ENCODE measurements at regions of chrX and their contacts with region 1.

Region 1: DNA sequence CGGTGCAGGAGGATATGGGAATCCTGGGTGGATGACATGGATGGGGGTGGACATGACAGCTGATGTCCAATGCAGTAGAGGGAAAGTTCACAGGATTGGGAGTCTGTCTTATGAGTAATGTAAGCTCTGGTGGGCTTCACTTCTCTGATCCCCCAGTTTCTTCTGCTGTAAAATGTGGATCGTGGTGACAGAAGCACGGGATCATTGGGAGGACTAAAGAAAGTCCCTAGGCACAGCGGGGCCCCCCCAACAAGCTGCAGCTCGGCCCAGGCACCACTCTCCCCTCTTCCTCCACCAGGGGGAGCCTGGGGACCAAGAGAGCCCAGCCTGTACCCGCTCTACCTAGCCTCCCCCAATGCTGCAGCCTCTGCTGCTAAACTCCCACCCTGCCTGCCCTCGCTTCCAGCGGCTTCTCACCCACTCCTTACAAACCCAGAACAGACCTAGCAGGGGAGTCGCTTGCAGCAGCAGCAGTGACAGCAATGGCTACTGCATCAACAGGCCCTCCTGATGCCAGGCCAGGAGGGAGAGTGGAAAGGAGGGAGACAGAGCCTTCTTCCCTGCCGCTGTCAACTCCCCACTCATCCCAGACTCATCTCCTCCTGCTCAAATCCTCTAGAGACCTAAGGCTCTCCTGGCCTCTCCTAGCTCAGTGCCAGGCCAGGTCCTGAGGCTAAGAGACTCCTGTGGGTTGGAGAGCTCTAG is 36.1 kb upstream of the IQSEC2 start:
- DNase-seq: peak; percentile 68
- H3K4me3 Mint-ChIP-seq: no peak overlapping the region
- H3K27ac Mint-ChIP-seq: no peak overlapping the region
- H3K4me1 Mint-ChIP-seq: no peaks in the 10 kb centered on the region
- H3K27me3 Mint-ChIP-seq: peaks cover 68% of the 10 kb centered on the region
- CTCF ChIP-seq: peak; percentile 83

Region 2: GRCh38 chrX:53284684-53285447 is 32.7 kb before region 1 on chrX:
- CTCF ChIA-PET with region 1: interaction called, 53 read pairs
- POLR2A ChIA-PET with region 1: interaction called, 7 read pairs
- intact Hi-C with region 1: no loop called
- DNase-seq: peak; percentile 62
- H3K4me3 Mint-ChIP-seq: no peak overlapping the region
- H3K27ac Mint-ChIP-seq: no peak overlapping the region
- H3K4me1 Mint-ChIP-seq: peaks cover 33% of the 10 kb centered on the region
- H3K27me3 Mint-ChIP-seq: peaks cover 69% of the 10 kb centered on the region
- CTCF ChIP-seq: peak; percentile 86

Region 3: GRCh38 chrX:53305996-53306937 is 11.2 kb before region 1 on chrX:
- CTCF ChIA-PET with region 1: interaction called, 17 read pairs
- POLR2A ChIA-PET with region 1: no interaction called
- intact Hi-C with region 1: no loop called
- DNase-seq: no peak
- H3K4me3 Mint-ChIP-seq: no peak overlapping the region
- H3K27ac Mint-ChIP-seq: no peak overlapping the region
- H3K4me1 Mint-ChIP-seq: no peaks in the 10 kb centered on the region
- H3K27me3 Mint-ChIP-seq: peaks cover 48% of the 10 kb centered on the region
- CTCF ChIP-seq: no peak

Region 4: GRCh38 chrX:53412446-53412845 is 94.9 kb after region 1 on chrX:
- CTCF ChIA-PET with region 1: interaction called, 10 read pairs
- POLR2A ChIA-PET with region 1: no interaction called
- intact Hi-C with region 1: no loop called
- DNase-seq: no peak
- H3K4me3 Mint-ChIP-seq: no peak overlapping the region
- H3K27ac Mint-ChIP-seq: no peak overlapping the region
- H3K4me1 Mint-ChIP-seq: peaks cover 6% of the 10 kb centered on the region
- H3K27me3 Mint-ChIP-seq: no peaks in the 10 kb centered on the region
- CTCF ChIP-seq: no peak

Region 5: GRCh38 chrX:53447441-53447840 is 129.9 kb after region 1 on chrX:
- CTCF ChIA-PET with region 1: interaction called, 19 read pairs
- POLR2A ChIA-PET with region 1: no interaction called
- intact Hi-C with region 1: loop called (anchors 1 kb)
- DNase-seq: no peak
- H3K4me3 Mint-ChIP-seq: no peak overlapping the region
- H3K27ac Mint-ChIP-seq: no peak overlapping the region
- H3K4me1 Mint-ChIP-seq: peaks cover 5% of the 10 kb centered on the region
- H3K27me3 Mint-ChIP-seq: peaks cover 24% of the 10 kb centered on the region
- CTCF ChIP-seq: no peak

Region 6: GRCh38 chrX:53831662-53832635 is 514.4 kb after region 1 on chrX:
- CTCF ChIA-PET with region 1: no interaction called
- POLR2A ChIA-PET with region 1: no interaction called
- intact Hi-C with region 1: loop called (anchors 5 kb)
- DNase-seq: peak; percentile 66
- H3K4me3 Mint-ChIP-seq: no peak overlapping the region
- H3K27ac Mint-ChIP-seq: no peak overlapping the region
- H3K4me1 Mint-ChIP-seq: no peaks in the 10 kb centered on the region
- H3K27me3 Mint-ChIP-seq: peaks cover 33% of the 10 kb centered on the region
- CTCF ChIP-seq: peak; percentile 64

Measured in MCF 10A (cell line).